Lower leg skin (tissue), 4 donors: ENCODE measurements at regions of chr9 and their contacts with region 1.

Region 1: GRCh38 chr9:78118742-78119473 is 87.3 kb upstream of the GNAQ start:
- DNase-seq: no peak
- H3K4me3 ChIP-seq: no peak overlapping the region
- CTCF ChIP-seq: no peak
- POLR2A ChIP-seq: no peak

Region 2: DNA sequence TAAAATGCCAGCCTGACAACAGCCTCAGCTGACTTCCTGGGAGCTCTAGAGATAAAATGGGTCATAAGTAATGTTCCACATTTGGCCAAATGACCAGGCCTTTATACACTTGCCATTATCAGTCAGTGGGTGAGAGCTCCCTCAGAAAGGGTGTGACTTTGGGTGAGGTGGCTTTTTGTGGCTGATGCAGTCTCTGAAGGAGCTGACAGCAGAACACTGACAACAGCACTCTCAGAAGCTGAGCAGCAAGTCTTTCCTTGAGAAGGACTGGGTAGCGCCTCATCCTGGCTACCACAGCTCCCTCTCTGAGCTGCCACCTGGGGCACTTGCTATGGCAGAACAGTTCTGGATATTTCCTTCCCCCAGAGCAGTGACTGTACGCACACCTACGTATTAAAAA is 65.3 kb before region 1 on chr9:
- intact Hi-C with region 1: loop called (anchors 10 kb)
- DNase-seq: no peak
- H3K4me3 ChIP-seq: no peak overlapping the region
- CTCF ChIP-seq: no peak
- POLR2A ChIP-seq: no peak